Activated CD4-positive, alpha-beta T cell treated with anti-CD3 and anti-CD28 coated beads, Interleukin-2, amount 10 ng/mL, durations not matched to agents 24 days and 14 days (primary cell): ENCODE measurements at regions of chr21 and their contacts with region 1.

Region 1: DNA sequence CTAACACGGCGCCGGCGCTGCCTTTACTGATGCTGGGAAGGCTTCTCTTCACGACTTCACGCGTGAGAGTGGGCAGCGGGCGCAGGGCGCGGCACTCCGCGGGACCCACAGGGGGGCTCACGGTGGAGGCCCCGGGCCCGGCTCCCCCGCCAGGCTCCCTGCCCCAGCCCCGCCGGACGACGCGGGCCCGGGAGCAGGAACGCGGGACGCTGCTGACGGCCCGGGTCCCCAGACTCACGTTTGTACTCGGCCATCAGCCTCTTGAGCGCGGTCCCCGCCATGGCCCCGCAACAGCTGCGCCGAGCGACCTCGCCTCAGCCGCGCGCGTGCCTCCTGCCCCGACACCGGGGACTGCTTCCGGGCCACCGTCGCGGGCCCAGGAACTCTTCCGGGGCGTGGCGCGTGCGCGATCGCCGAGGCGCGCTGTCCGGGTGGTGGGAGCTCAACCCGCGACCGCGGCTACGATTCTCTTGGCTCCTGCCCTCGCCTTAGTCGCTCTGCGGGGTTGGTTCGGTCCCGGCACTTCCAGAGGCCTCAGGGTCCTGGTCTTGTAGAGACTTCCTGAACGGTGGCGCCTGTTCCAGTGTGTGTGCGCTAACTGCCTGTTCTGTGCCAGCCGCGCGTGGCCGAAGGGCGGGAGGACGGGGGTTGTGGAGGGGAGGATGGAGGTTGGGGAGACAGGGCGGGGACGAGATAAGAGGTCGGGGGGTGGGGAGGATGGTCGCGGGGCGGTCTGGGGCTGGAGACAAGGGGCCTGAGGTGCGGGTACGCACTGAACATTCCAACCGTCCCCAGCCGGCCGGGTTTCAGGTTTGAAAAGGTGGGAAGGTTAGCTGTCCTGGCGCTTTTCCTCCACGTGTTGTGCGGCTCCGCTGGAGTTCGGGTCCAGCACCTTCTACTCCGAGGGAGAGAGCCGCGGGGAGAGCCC is at the start of gene UBE2G2:
- DNase-seq: peak; percentile 97
- H3K4me3 Mint-ChIP-seq: peak within 1 kb of the TSS; percentile 100
- H3K27ac Mint-ChIP-seq: peak within 1 kb of the TSS; percentile 93
- H3K4me1 Mint-ChIP-seq: peaks cover 37% of the 10 kb centered on the region
- H3K27me3 Mint-ChIP-seq: no peaks in the 10 kb centered on the region
- total RNA-seq, gene UBE2G2: 143 and 148 TPM in 2 replicates

Region 2: GRCh38 chr21:43613755-43614638 is 1187.7 kb before region 1 on chr21:
- intact Hi-C with region 1: no loop called
- DNase-seq: peak; percentile 62
- H3K4me3 Mint-ChIP-seq: no peak overlapping the region
- H3K27ac Mint-ChIP-seq: no peak overlapping the region
- H3K4me1 Mint-ChIP-seq: peaks cover 5% of the 10 kb centered on the region
- H3K27me3 Mint-ChIP-seq: peaks cover 5% of the 10 kb centered on the region

Region 3: GRCh38 chr21:44626262-44626661 is 175.5 kb before region 1 on chr21:
- intact Hi-C with region 1: no loop called
- DNase-seq: no peak
- H3K4me3 Mint-ChIP-seq: no peak overlapping the region
- H3K27ac Mint-ChIP-seq: no peak overlapping the region
- H3K4me1 Mint-ChIP-seq: peaks cover 4% of the 10 kb centered on the region
- H3K27me3 Mint-ChIP-seq: peaks cover 2% of the 10 kb centered on the region

Region 4: GRCh38 chr21:44657635-44658540 is 143.8 kb before region 1 on chr21 and contains the start of gene KRTAP12-3:
- intact Hi-C with region 1: no loop called
- DNase-seq: peak; percentile 87
- H3K4me3 Mint-ChIP-seq: peak within 1 kb of the TSS; percentile 56
- H3K27ac Mint-ChIP-seq: peak within 1 kb of the TSS; percentile 91
- H3K4me1 Mint-ChIP-seq: peaks cover 44% of the 10 kb centered on the region
- H3K27me3 Mint-ChIP-seq: peaks cover 6% of the 10 kb centered on the region
- total RNA-seq, gene KRTAP12-3: not detected in 2 replicates

Region 5: DNA sequence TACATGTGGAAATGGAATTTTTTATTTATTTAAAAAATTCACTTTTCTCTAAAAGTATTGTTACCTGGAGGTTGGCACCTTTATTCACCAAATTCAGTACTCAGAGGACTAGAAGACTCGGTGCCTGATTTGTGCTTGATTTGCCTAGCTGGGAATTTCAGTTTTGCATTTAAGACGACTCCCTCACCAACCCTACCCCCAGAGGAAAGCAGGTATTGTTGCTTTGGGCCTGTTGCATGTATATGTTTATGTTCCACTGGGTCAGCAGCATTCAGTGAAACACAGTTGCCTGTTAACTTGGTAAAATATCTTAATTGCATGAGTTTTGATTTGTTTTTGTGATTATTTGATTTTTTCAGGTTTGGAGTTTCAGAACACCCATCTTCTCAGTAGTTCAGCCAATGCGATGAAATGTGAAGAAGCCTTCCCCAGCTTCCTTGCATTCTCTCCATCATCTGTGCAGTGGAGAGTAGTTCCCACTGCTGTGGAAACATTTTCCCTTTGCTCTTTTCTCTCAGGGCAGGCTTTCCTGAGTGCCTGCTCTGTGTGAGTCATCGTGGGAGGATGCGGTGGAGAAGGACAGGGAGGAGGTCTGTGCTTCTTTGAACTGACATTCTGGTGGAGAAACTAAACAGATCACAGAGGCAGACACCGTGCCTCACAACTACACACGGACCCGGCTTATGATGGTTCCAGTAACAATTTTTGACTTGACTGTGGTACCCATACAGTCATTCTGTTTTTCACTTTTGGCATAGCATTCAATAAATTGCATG is 279.1 kb after region 1 on chr21:
- intact Hi-C with region 1: loop called (anchors 10 kb)
- DNase-seq: peak; percentile 83
- H3K4me3 Mint-ChIP-seq: peak overlapping the region; percentile 74
- H3K27ac Mint-ChIP-seq: peak overlapping the region; percentile 87
- H3K4me1 Mint-ChIP-seq: peaks cover 89% of the 10 kb centered on the region
- H3K27me3 Mint-ChIP-seq: no peaks in the 10 kb centered on the region